ENCODE measurements at regions of chr15 and their contacts with region 1.

Region 1: DNA sequence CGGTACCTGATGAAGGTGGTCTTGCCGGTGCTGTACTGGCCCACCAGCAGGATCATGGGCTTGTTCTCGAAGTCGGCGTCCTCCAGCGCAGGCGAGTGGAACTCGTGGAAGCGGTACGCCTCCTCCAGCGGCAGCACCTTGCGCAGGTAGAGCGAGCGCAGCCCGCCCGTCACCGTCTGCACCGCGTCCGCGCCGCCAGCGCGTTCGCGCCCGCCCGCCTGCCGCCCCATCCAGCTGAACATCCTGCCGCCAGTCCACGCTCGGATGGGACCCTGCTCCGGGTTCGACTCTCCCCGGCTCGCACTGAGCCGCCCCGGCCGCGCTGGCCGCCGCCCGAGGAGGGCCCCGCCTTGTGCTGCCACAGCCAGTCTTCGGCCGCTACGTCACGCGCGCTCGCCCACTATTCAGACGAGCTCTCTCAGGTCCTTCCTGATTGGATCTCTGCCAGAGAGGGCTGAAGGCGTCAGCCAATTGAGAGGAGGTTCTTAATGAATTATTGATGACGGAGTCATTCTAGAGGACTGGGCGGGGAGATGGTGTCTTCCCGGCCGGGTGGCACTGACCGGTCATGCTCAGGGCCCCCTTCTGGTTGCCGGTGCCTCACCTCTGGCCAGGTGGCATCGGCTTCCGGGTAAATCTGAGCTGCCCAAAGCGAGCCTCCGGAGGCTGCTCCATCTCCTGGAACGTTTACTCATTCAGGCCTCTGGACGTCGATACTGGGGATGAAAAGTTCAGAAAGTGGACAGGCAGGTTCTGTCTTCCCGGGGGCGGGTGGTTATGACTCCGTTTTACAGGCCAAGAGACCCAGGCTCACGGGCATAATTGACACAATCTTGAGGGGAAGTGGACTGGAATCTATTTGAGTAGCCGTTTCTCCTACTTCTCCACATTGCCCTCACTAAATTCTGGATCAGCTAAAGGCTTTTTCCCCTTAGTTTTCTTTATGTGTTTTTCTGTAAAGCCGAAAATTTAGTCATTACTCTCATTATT is at the start of gene EHD4:
- DNase-seq: peak; percentile 96
- H3K4me3 Mint-ChIP-seq: peak within 1 kb of the TSS; percentile 82
- H3K27ac Mint-ChIP-seq: peak within 1 kb of the TSS; percentile 90
- H3K4me1 Mint-ChIP-seq: peaks cover 55% of the 10 kb centered on the region
- H3K27me3 Mint-ChIP-seq: peaks cover 18% of the 10 kb centered on the region
- total RNA-seq, gene EHD4: 25.0 to 25.3 TPM

Region 2: GRCh38 chr15:41944313-41944940 is 28.1 kb before region 1 on chr15:
- CTCF ChIA-PET with region 1: interaction called, 48 read pairs
- POLR2A ChIA-PET with region 1: interaction called, 186 read pairs
- DNase-seq: no peak
- H3K4me3 Mint-ChIP-seq: no peak overlapping the region
- H3K27ac Mint-ChIP-seq: no peak overlapping the region
- H3K4me1 Mint-ChIP-seq: peaks cover 34% of the 10 kb centered on the region
- H3K27me3 Mint-ChIP-seq: no peaks in the 10 kb centered on the region

Region 3: DNA sequence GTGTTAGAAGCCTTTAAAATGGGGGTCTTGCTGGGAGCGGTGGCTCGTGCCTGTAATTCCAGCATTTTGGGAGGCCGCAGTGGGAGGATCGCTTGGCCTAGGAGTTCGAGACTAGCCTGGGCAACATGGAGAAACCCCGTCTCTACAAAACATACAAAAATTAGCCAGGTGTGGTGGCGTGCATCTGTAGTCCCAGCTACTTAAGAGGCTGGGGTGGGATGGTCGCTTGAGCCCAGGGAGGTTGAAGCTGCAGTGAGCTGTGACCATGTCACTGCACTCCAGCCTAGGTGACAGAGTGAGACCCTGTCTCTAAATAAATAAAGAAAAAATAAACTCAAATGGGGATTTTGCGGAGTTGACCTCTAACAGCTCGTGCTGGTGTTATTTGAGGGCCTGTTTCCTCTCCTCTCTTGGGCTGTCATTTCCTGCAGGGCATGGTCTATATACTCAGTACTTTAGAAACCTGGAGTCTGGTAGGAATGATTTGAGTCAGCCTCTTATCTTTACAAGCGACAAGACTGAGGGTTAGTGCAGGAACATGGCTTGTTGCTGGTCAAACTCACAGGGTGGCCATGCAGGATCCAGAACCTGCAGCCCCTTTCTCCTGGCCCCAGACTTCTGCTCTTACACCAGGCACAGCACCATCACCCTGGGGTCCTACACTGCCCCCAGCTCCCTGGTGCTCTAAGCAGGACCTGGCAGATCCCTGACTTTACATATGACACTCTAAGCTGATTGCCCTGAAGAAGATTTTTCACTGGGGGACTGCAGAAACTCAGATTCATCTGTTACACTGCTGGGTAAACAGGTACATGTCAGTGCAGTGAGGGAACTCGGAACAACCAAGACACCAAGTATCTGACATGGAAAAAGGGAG is 15.3 kb before region 1 on chr15:
- CTCF ChIA-PET with region 1: interaction called, 4 read pairs
- POLR2A ChIA-PET with region 1: interaction called, 28 read pairs
- DNase-seq: no peak
- H3K4me3 Mint-ChIP-seq: no peak overlapping the region
- H3K27ac Mint-ChIP-seq: peak overlapping the region; percentile 69
- H3K4me1 Mint-ChIP-seq: peaks cover 47% of the 10 kb centered on the region
- H3K27me3 Mint-ChIP-seq: no peaks in the 10 kb centered on the region

Measured in activated CD4-positive, alpha-beta memory T cell treated with anti-CD3 and anti-CD28 coated beads, Interleukin-2, amount 10 ng/mL, durations not matched to agents 7 days and 5 days (primary cell).